ENCODE measurements at regions of chr3 and their contacts with region 1.

Region 1: DNA sequence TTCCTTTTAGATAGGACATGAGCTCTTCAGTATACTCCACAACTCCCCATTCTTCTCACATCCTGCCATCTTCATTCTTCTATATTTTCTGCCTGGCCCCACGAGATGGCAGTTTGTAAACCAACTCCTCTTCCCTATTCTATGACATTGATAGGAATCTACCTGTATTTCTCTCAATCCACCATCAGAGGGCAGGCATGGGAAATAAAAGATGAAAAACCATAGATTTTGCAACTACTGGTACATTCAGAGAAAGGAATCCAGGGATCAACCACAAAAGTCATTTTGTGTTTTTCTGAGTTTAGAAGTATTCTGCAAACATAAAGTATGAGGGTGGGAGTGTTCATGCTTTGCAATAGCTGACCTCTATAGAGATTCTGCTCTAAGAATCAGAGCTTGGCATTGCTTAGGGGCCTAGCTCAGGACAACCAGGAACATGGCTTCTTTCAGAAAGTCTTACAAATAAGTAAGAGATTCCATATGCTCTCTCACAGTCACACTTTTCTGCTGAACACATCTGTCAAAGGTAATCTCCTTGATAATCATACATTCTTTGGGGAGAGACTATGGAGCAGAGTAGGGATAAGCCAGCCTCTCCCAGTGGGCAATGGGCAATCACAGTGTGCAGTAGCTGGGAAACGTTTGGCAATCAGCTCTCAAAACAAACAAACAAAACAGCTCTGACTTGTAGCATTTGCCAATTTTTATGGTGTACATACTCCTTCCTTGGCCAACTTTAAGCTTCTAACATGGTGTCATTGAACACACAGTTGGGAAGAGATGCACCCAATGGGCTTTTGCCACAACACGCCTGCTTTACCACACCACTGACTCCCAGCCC is 43.1 kb upstream of the SLC25A36 start:
- DNase-seq: peak; percentile 32
- ATAC-seq: peak; percentile 57
- H3K4me3 Mint-ChIP-seq: no peak overlapping the region
- H3K27ac Mint-ChIP-seq: no peak overlapping the region
- H3K4me1 Mint-ChIP-seq: no peaks in the 10 kb centered on the region
- H3K27me3 Mint-ChIP-seq: peaks cover 20% of the 10 kb centered on the region

Region 2: GRCh38 chr3:140664115-140664514 is 234.4 kb before region 1 on chr3:
- CTCF ChIA-PET with region 1: no interaction called
- POLR2A ChIA-PET with region 1: no interaction called
- DNase-seq: no peak
- ATAC-seq: no peak
- H3K4me3 Mint-ChIP-seq: no peak overlapping the region
- H3K27ac Mint-ChIP-seq: no peak overlapping the region
- H3K4me1 Mint-ChIP-seq: no peaks in the 10 kb centered on the region
- H3K27me3 Mint-ChIP-seq: no peaks in the 10 kb centered on the region

Region 3: GRCh38 chr3:140914384-140914945 is 15.9 kb after region 1 on chr3:
- CTCF ChIA-PET with region 1: no interaction called
- POLR2A ChIA-PET with region 1: no interaction called
- DNase-seq: no peak
- ATAC-seq: no peak
- H3K4me3 Mint-ChIP-seq: no peak overlapping the region
- H3K27ac Mint-ChIP-seq: no peak overlapping the region
- H3K4me1 Mint-ChIP-seq: no peaks in the 10 kb centered on the region
- H3K27me3 Mint-ChIP-seq: peaks cover 11% of the 10 kb centered on the region

Region 4: DNA sequence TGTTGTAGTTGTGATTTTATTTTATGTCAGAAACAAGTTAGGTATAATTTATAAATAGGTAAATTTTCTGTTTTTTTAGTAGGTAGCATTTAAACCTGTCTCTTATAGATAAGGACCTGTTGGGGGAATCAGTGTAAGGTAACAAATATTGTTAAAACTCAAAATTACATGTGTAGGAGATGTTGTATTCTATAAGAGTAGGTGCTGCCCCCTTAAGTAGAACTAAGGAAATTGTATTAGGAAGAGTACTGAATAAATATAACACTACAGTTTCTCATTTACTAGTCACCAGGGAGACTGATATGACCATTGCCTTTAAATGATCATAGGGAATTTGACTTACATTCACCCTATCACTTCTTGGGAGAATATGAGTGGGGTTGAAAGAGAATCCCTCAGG is 74.3 kb after region 1 on chr3:
- CTCF ChIA-PET with region 1: interaction called, 11 read pairs
- POLR2A ChIA-PET with region 1: no interaction called
- DNase-seq: no peak
- ATAC-seq: peak; percentile 53
- H3K4me3 Mint-ChIP-seq: no peak overlapping the region
- H3K27ac Mint-ChIP-seq: no peak overlapping the region
- H3K4me1 Mint-ChIP-seq: peaks cover 8% of the 10 kb centered on the region
- H3K27me3 Mint-ChIP-seq: no peaks in the 10 kb centered on the region

Measured in activated CD8-positive, alpha-beta T cell treated with anti-CD3 and anti-CD28 coated beads, Interleukin-2, amount 10 ng/mL, durations not matched to agents 7 days and 5 days (primary cell).